Naive thymus-derived CD4-positive, alpha-beta T cell (primary cell): ENCODE measurements at regions of chr3 and their contacts with region 1.

Region 1: GRCh38 chr3:122092460-122093165 is 37.5 kb downstream of the CD86 start:
- DNase-seq: peak in 1 of 9 donors; percentile 51
- ATAC-seq: peak; percentile 84
- H3K4me3 ChIP-seq: no peak overlapping the region
- H3K4me3 Mint-ChIP-seq: peak overlapping the region in 1 of 10 donors; percentile 51
- H3K27ac ChIP-seq: no peak overlapping the region
- H3K27ac Mint-ChIP-seq: peak overlapping the region in 1 of 9 donors; percentile 87
- H3K4me1 ChIP-seq: no peaks in the 10 kb centered on the region
- H3K4me1 Mint-ChIP-seq: peaks cover 0 to 31% (median 0%) of the 10 kb centered on the region in 7 donors
- H3K27me3 ChIP-seq: no peaks in the 10 kb centered on the region
- H3K27me3 Mint-ChIP-seq: peaks cover 0 to 4% (median 0%) of the 10 kb centered on the region in 5 donors

Region 2: GRCh38 chr3:121654493-121655385 is 437.9 kb before region 1 on chr3:
- CTCF ChIA-PET with region 1: no interaction called
- POLR2A ChIA-PET with region 1: no interaction called
- intact Hi-C with region 1: loop called in 1 of 2 experiments (anchors 10 kb)
- DNase-seq: peak in 4 of 9 donors; percentile 5 to 22 (median 16)
- ATAC-seq: peak; percentile 62
- H3K4me3 ChIP-seq: peak overlapping the region; percentile 24
- H3K4me3 Mint-ChIP-seq: peak overlapping the region; percentile 8 to 81 (median 54)
- H3K27ac ChIP-seq: peak overlapping the region; percentile 11
- H3K27ac Mint-ChIP-seq: peak overlapping the region; percentile 70 to 93 (median 85)
- H3K4me1 ChIP-seq: peaks cover 46 to 61% of the 10 kb centered on the region in 2 donors
- H3K4me1 Mint-ChIP-seq: peaks cover 66 to 93% (median 83%) of the 10 kb centered on the region in 7 donors
- H3K27me3 ChIP-seq: no peaks in the 10 kb centered on the region
- H3K27me3 Mint-ChIP-seq: no peaks in the 10 kb centered on the region

Region 3: GRCh38 chr3:121883507-121883906 is 209.1 kb before region 1 on chr3:
- CTCF ChIA-PET with region 1: no interaction called
- POLR2A ChIA-PET with region 1: no interaction called
- intact Hi-C with region 1: loop called in 1 of 2 experiments (anchors 10 kb)
- DNase-seq: no peak
- ATAC-seq: no peak
- H3K4me3 ChIP-seq: no peak overlapping the region
- H3K4me3 Mint-ChIP-seq: no peak overlapping the region
- H3K27ac ChIP-seq: no peak overlapping the region
- H3K27ac Mint-ChIP-seq: no peak overlapping the region
- H3K4me1 ChIP-seq: no peaks in the 10 kb centered on the region
- H3K4me1 Mint-ChIP-seq: no peaks in the 10 kb centered on the region
- H3K27me3 ChIP-seq: no peaks in the 10 kb centered on the region
- H3K27me3 Mint-ChIP-seq: no peaks in the 10 kb centered on the region

Region 4: DNA sequence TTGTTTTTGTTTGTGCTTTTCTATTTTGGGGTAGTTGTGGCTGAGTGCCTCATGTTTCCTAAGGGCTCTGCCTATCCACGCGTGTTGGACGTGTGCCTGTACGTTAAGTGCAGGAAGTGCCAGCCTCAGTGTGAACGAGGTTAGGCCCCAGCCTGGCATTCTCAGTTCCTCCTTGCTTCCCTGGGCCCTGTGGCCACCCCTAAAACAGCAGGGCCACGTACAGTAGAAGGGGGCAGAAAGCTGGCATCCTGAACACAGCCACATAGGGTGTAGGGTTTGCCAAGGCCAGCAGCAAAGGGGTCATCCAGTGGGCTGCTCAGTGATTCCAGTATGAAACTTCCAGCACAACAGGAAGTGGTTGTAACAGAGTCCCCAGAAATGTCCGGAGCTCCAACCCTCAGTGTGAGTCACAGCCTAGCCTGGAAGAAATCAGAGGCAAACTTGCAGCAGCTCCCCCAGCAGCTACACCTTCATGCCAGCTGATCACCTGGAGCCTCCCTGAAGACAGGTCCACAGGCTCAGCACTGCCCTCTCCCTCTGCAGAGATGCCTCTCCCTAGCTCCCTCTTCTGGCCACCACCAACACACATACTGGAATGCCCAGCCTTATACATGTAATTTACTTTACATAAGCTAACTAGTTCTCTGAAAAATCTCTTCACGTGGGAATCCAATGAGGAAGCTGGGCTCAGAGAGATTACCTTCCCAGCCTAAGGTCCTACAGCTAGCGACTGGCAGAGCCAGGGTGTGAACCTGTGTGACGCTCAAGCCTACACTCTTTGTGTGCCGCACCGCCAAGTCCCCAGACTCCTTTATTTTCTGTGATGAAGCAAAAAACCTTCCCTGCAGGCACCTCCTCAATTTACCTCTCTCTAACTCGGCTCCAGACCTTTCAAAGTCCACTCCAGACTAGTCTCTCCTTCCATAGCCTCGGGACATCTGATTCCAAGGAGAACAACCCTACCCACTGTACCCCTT is 97.2 kb before region 1 on chr3:
- CTCF ChIA-PET with region 1: no interaction called
- POLR2A ChIA-PET with region 1: no interaction called
- intact Hi-C with region 1: loop called in 1 of 2 experiments (anchors 5 kb)
- DNase-seq: peak in 7 of 9 donors; percentile 9 to 40 (median 18)
- ATAC-seq: peak; percentile 71
- H3K4me3 ChIP-seq: no peak overlapping the region
- H3K4me3 Mint-ChIP-seq: no peak overlapping the region
- H3K27ac ChIP-seq: no peak overlapping the region
- H3K27ac Mint-ChIP-seq: peak overlapping the region in 2 of 9 donors; percentile 7 to 54
- H3K4me1 ChIP-seq: no peaks in the 10 kb centered on the region
- H3K4me1 Mint-ChIP-seq: peaks cover 4 to 26% (median 7%) of the 10 kb centered on the region in 7 donors
- H3K27me3 ChIP-seq: no peaks in the 10 kb centered on the region
- H3K27me3 Mint-ChIP-seq: peaks cover 0 to 3% (median 0%) of the 10 kb centered on the region in 5 donors

Region 5: DNA sequence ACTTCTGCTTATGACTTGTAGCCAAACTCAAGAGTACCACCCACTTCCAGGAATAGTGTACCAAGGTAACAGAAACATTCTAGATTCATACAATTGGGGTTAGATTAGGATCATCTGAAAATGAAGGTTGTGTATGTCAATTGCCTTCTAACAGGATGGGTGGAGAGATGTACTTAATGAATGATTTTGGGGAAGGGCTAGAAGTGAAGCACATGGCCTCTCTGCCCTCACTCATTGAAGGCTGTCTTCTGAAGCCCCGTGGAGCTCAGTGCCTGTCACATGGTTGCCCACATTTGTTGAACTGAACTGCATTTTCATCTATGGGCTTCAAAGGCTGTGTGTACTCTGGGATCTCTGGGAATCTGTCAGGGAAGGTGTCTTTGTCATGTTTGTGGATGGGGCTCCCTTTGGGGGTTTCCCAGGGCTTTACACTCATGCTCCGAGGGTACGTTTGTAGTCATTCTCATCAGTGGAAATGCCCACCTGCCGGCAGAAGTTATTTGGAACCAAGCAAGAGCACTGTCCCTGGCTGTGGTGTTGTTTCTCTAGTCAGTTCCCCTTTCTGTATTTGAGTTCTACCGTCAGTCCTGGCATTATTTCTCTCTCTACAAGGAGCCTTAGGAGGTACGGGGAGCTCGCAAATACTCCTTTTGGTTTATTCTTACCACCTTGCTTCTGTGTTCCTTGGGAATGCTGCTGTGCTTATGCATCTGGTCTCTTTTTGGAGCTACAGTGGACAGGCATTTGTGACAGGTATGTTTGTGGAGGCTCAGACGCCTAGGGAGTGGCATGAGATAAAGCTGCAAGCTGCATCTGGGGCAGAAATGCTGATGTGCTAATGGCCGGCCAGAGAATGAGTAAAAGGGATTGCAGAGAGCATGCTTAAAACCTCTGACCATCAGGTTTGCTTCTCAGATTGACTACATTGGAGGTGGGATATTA is 15.0 kb before region 1 on chr3:
- CTCF ChIA-PET with region 1: no interaction called
- POLR2A ChIA-PET with region 1: no interaction called
- intact Hi-C with region 1: loop called in 1 of 2 experiments (anchors 2 kb)
- DNase-seq: no peak
- ATAC-seq: peak; percentile 43
- H3K4me3 ChIP-seq: no peak overlapping the region
- H3K4me3 Mint-ChIP-seq: peak overlapping the region in 1 of 10 donors; percentile 47
- H3K27ac ChIP-seq: no peak overlapping the region
- H3K27ac Mint-ChIP-seq: peak overlapping the region in 1 of 9 donors; percentile 81
- H3K4me1 ChIP-seq: no peaks in the 10 kb centered on the region
- H3K4me1 Mint-ChIP-seq: peaks cover 0 to 69% (median 0%) of the 10 kb centered on the region in 7 donors
- H3K27me3 ChIP-seq: peaks cover 0 to 4% of the 10 kb centered on the region in 2 donors
- H3K27me3 Mint-ChIP-seq: peaks cover 2 to 51% (median 32%) of the 10 kb centered on the region in 5 donors